ENCODE measurements at regions of chr3 and their contacts with region 1.

Region 1: GRCh38 chr3:139111392-139112229 is 66.9 kb upstream of the PRR23C start:
- DNase-seq: no peak
- H3K4me3 ChIP-seq: no peak overlapping the region
- H3K27me3 ChIP-seq: peaks cover 7% of the 10 kb centered on the region
- CTCF ChIP-seq: peak; percentile 88

Region 2: GRCh38 chr3:139095803-139096466 is 15.7 kb before region 1 on chr3:
- CTCF ChIA-PET with region 1: interaction called, 24 read pairs
- POLR2A ChIA-PET with region 1: no interaction called
- DNase-seq: no peak
- H3K4me3 ChIP-seq: no peak overlapping the region
- H3K27me3 ChIP-seq: peaks cover 3% of the 10 kb centered on the region; the same call in 1 of the 2 replicates
- CTCF ChIP-seq: no peak

Region 3: DNA sequence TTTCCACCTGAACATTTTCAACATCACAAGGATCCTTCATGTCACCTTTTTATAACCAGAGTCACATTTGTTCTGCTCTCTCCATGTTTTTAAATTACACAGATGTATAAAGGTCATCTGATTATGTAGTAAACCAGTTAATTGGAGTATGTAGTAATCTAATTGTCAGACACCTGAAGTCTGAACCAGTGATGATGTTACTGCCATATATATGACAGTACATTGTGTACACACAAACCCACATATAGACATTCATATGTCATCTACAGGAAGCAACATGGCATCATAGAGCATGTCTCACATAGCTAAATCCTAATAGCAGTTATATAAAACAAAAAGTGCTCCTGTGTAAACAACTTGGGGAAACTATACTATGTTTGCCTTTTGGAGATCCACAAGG is 28.9 kb after region 1 on chr3:
- CTCF ChIA-PET with region 1: interaction called, 10 read pairs
- POLR2A ChIA-PET with region 1: no interaction called
- DNase-seq: no peak
- H3K4me3 ChIP-seq: no peak overlapping the region
- H3K27me3 ChIP-seq: no peaks in the 10 kb centered on the region
- CTCF ChIP-seq: no peak

Region 4: GRCh38 chr3:139251529-139251928 is 139.9 kb after region 1 on chr3:
- CTCF ChIA-PET with region 1: no interaction called
- POLR2A ChIA-PET with region 1: no interaction called
- DNase-seq: no peak
- H3K4me3 ChIP-seq: no peak overlapping the region
- H3K27me3 ChIP-seq: peaks cover 4% of the 10 kb centered on the region
- CTCF ChIP-seq: no peak

Region 5: DNA sequence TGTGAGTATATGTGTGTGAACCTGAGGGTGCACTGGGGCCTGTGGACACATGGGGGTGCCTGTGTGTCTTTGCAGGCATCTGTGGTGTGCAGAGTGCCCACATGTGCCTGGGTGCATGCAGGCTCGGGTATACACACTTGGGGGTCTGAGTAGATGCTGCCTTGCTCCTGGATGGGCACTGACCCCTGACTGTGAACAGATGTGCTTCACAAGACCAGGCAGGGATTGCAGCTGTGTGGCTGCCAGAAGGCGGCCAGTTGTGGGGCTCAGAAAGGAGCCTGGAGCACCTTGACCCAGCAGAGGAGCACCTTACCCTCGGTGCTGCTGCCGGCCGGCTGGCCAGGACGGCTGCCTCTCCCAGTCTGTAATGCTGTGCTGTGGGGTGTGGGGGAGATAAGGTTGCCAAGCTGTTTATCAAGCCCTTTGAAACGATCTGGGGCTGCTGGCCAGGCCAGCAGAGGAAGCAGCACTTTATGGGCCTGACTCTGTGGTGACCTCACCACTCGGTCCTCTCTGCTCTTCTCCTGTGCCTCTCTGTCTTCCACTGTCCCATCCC is 176.7 kb after region 1 on chr3:
- CTCF ChIA-PET with region 1: interaction called, 10 read pairs
- POLR2A ChIA-PET with region 1: no interaction called
- DNase-seq: no peak
- H3K4me3 ChIP-seq: no peak overlapping the region
- H3K27me3 ChIP-seq: no peaks in the 10 kb centered on the region
- CTCF ChIP-seq: peak; percentile 40

Region 6: DNA sequence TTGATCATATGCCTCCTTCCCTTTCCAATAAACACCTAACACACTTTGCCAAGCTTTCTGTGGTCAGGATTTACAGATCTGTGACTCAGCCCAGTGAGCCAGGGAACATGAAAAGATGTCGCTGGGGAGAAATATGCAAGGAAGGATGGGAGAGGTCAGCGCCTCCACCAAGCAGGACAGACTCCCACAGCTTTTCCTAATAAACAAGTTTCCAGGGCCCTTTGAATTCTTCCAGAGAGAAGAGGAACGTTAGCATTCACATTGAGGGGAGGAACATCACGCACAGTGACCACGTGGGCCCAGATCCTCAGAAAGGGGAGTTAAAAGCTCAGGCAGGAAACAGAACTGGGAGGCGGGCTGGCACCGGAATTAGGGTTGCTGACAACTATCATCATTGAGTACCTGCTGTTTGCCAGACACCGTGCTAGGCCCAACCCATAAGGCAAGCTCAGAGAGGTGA is 198.9 kb after region 1 on chr3:
- CTCF ChIA-PET with region 1: interaction called, 40 read pairs
- POLR2A ChIA-PET with region 1: no interaction called
- DNase-seq: peak; percentile 99
- H3K4me3 ChIP-seq: no peak overlapping the region
- H3K27me3 ChIP-seq: no peaks in the 10 kb centered on the region
- CTCF ChIP-seq: no peak

Region 7: DNA sequence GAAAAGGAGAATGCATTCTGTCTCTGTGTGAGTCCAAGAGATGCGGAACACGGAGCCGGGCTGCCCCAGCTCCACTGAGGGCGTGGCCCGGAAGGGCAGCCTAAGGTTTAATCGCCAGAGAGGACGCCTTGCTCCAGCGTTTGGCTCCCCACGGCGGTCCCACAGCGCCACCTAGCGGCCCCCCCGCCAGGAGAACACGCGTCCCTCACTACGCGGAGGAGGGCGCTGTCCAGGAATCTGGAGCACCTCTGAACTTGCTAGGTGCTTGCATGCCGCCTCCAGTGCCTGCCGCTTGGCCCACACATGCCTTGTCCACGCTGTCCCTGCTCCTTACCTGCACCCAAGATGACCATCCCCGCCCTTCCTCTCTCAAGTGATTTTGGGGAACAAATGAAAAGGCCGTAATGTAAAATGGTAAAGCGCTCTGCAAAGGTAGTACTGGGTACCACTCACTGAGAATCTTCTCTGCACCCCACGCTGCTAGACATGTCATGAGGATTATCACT is 217.8 kb after region 1 on chr3:
- CTCF ChIA-PET with region 1: interaction called, 189 read pairs
- POLR2A ChIA-PET with region 1: no interaction called
- DNase-seq: no peak
- H3K4me3 ChIP-seq: no peak overlapping the region
- H3K27me3 ChIP-seq: peaks cover 2% of the 10 kb centered on the region; the same call in 1 of the 2 replicates
- CTCF ChIP-seq: peak; percentile 99

Measured in BJ (cell line).